ENCODE measurements at regions of chr16 and their contacts with region 1.

Region 1: GRCh38 chr16:72093448-72094265 is at the starts of genes DHX38 and TXNL4B:
- DNase-seq: peak; percentile 96
- ATAC-seq: peak; percentile 96
- H3K4me3 ChIP-seq: peak within 1 kb of the TSS; percentile 84 to 95 (median 88)
- H3K4me3 Mint-ChIP-seq: peak within 1 kb of the TSS; percentile 90
- H3K27ac ChIP-seq: peak within 1 kb of the TSS; percentile 85 to 91
- H3K27ac Mint-ChIP-seq: peak within 1 kb of the TSS; percentile 92
- H3K4me1 ChIP-seq: peaks cover 20 to 28% of the 10 kb centered on the region in 2 donors
- H3K4me1 Mint-ChIP-seq: peaks cover 42% of the 10 kb centered on the region
- H3K27me3 ChIP-seq: no peaks in the 10 kb centered on the region
- H3K27me3 Mint-ChIP-seq: no peaks in the 10 kb centered on the region
- CTCF ChIP-seq: no peak
- total RNA-seq, gene DHX38: 114 and 124 TPM in 2 replicates
- total RNA-seq, gene TXNL4B: 15.4 and 16.1 TPM in 2 replicates

Region 2: DNA sequence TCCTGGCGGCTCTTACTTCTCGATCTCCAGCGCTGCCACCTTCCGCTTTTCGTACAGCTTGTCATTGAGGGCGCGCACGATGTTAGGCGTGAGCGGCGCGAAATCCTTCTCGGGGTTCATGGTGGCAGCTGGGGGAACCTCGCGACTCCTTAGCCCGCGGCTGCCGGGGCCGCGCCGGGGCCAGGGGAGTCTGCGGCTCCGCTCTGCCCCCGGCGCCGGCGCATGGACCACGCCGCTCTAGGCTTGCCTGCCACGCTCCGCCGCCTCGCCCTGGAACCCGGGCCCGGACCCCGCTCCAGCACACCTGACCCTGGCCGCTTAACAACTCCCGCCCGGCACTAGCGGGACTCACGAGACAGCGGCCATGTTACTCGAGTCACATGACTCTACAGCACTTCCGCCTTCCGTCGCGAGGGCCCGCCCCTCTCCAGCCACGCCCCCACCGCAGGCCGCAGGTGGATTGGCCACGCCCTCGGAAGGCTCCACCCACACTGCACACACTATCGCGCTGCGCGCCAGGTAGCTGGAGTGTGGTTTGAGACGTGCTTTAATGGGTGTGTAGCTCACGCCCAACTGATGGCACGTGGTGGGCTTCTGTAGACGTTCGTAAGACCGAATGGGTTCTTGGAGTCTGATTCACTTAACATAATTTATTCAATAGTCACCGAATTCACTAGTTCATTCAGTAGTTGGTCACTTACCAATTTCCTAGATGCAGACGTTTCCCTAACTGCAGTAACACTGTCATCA is 1292.7 kb before region 1 on chr16 and contains the start of gene VAC14:
- CTCF ChIA-PET with region 1: no interaction called
- POLR2A ChIA-PET with region 1: no interaction called
- intact Hi-C with region 1: loop called (anchors 10 kb)
- DNase-seq: peak; percentile 97
- ATAC-seq: peak; percentile 98
- H3K4me3 ChIP-seq: peak within 1 kb of the TSS; percentile 38 to 86 (median 66)
- H3K4me3 Mint-ChIP-seq: peak within 1 kb of the TSS; percentile 98
- H3K27ac ChIP-seq: peak within 1 kb of the TSS; percentile 69 to 90
- H3K27ac Mint-ChIP-seq: peak within 1 kb of the TSS; percentile 96
- H3K4me1 ChIP-seq: peaks cover 16 to 21% of the 10 kb centered on the region in 2 donors
- H3K4me1 Mint-ChIP-seq: peaks cover 36% of the 10 kb centered on the region
- H3K27me3 ChIP-seq: peaks cover 0 to 6% (median 0%) of the 10 kb centered on the region in 4 experiments
- H3K27me3 Mint-ChIP-seq: no peaks in the 10 kb centered on the region
- CTCF ChIP-seq: no peak
- total RNA-seq, gene VAC14: 59.7 and 64.7 TPM in 2 replicates

Region 3: GRCh38 chr16:71894921-71895678 is 198.6 kb before region 1 on chr16 and contains the start of gene IST1:
- CTCF ChIA-PET with region 1: no interaction called
- POLR2A ChIA-PET with region 1: no interaction called
- intact Hi-C with region 1: loop called (anchors 5 kb)
- DNase-seq: peak; percentile 98
- ATAC-seq: peak; percentile 91
- H3K4me3 ChIP-seq: peak within 1 kb of the TSS; percentile 93 to 100 (median 99)
- H3K4me3 Mint-ChIP-seq: peak within 1 kb of the TSS; percentile 97
- H3K27ac ChIP-seq: peak within 1 kb of the TSS; percentile 83 to 88
- H3K27ac Mint-ChIP-seq: peak within 1 kb of the TSS; percentile 98
- H3K4me1 ChIP-seq: peaks cover 16 to 39% of the 10 kb centered on the region in 2 donors
- H3K4me1 Mint-ChIP-seq: peaks cover 22% of the 10 kb centered on the region
- H3K27me3 ChIP-seq: no peaks in the 10 kb centered on the region
- H3K27me3 Mint-ChIP-seq: no peaks in the 10 kb centered on the region
- CTCF ChIP-seq: no peak
- total RNA-seq, gene IST1: 268 and 302 TPM in 2 replicates

Region 4: GRCh38 chr16:72008424-72009216 is 85.0 kb before region 1 on chr16 and contains the start of gene DHODH:
- CTCF ChIA-PET with region 1: no interaction called
- POLR2A ChIA-PET with region 1: no interaction called
- intact Hi-C with region 1: loop called (anchors 1 kb)
- DNase-seq: peak; percentile 99
- ATAC-seq: peak; percentile 98
- H3K4me3 ChIP-seq: peak within 1 kb of the TSS; percentile 56 to 96 (median 66)
- H3K4me3 Mint-ChIP-seq: peak within 1 kb of the TSS; percentile 95
- H3K27ac ChIP-seq: peak within 1 kb of the TSS; percentile 73 to 85
- H3K27ac Mint-ChIP-seq: peak within 1 kb of the TSS; percentile 94
- H3K4me1 ChIP-seq: peaks cover 0 to 12% of the 10 kb centered on the region in 2 donors
- H3K4me1 Mint-ChIP-seq: peaks cover 16% of the 10 kb centered on the region
- H3K27me3 ChIP-seq: no peaks in the 10 kb centered on the region
- H3K27me3 Mint-ChIP-seq: peaks cover 4% of the 10 kb centered on the region
- CTCF ChIP-seq: no peak
- total RNA-seq, gene DHODH: 11.3 and 14.7 TPM in 2 replicates

Region 5: GRCh38 chr16:72066747-72067146 is 26.9 kb before region 1 on chr16:
- CTCF ChIA-PET with region 1: interaction called, 15 read pairs
- POLR2A ChIA-PET with region 1: no interaction called
- intact Hi-C with region 1: no loop called
- DNase-seq: peak; percentile 46
- ATAC-seq: no peak
- H3K4me3 ChIP-seq: no peak overlapping the region
- H3K4me3 Mint-ChIP-seq: no peak overlapping the region
- H3K27ac ChIP-seq: no peak overlapping the region
- H3K27ac Mint-ChIP-seq: no peak overlapping the region
- H3K4me1 ChIP-seq: no peaks in the 10 kb centered on the region
- H3K4me1 Mint-ChIP-seq: no peaks in the 10 kb centered on the region
- H3K27me3 ChIP-seq: no peaks in the 10 kb centered on the region
- H3K27me3 Mint-ChIP-seq: no peaks in the 10 kb centered on the region
- CTCF ChIP-seq: peak; percentile 67

Region 6: GRCh38 chr16:72172105-72173034 is 78.7 kb after region 1 on chr16 and contains the start of gene PMFBP1:
- CTCF ChIA-PET with region 1: interaction called, 3 read pairs
- POLR2A ChIA-PET with region 1: no interaction called
- intact Hi-C with region 1: loop called (anchors 1 kb)
- DNase-seq: peak; percentile 93
- ATAC-seq: peak; percentile 88
- H3K4me3 ChIP-seq: no peak within 1 kb of the TSS
- H3K4me3 Mint-ChIP-seq: peak within 1 kb of the TSS; percentile 52
- H3K27ac ChIP-seq: peak within 1 kb of the TSS; percentile 54 to 80
- H3K27ac Mint-ChIP-seq: peak within 1 kb of the TSS; percentile 91
- H3K4me1 ChIP-seq: peaks cover 12 to 13% of the 10 kb centered on the region in 2 donors
- H3K4me1 Mint-ChIP-seq: peaks cover 11% of the 10 kb centered on the region
- H3K27me3 ChIP-seq: no peaks in the 10 kb centered on the region
- H3K27me3 Mint-ChIP-seq: peaks cover 2% of the 10 kb centered on the region
- CTCF ChIP-seq: no peak
- total RNA-seq, gene PMFBP1: 9.5 and 9.7 TPM in 2 replicates

Region 7: DNA sequence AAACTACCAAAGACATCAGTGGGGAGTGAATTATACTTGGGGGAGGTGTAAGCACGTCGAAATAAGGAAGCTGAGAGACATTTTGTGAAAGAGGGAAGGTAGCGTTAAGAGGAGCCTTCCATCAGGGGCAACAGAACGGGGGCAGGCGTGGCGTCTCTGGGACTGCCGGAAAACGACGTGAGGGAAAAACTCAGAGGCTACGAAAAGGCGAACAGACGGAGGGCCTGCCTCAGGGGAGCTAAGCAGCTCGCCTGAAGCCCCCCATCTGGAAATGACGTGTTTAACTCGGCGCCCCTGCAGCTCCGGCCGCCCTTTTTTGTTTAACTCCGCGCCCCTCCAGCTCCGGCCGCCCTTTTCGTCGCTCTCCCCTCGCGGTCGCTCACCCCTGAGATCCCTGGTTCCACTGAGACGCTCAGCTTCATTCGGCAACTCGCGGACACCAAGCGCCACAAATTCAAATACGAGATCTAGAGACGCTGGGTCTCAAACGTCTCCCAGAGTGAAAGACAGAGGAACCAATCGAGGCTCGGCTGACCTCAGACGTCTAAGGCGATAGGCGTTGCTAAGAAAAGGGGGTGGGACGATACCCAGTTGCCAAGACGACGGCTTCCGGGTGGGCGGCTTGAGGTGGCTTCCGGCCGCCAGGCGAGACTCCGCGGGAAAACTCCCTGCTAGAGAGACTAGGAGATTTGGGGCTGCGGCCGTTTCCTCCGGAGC is 571.0 kb after region 1 on chr16:
- CTCF ChIA-PET with region 1: no interaction called
- POLR2A ChIA-PET with region 1: no interaction called
- intact Hi-C with region 1: loop called (anchors 1 kb)
- DNase-seq: peak; percentile 97
- ATAC-seq: peak; percentile 99
- H3K4me3 ChIP-seq: peak overlapping the region; percentile 87 to 99 (median 92)
- H3K4me3 Mint-ChIP-seq: peak overlapping the region; percentile 100
- H3K27ac ChIP-seq: peak overlapping the region; percentile 84 to 92
- H3K27ac Mint-ChIP-seq: peak overlapping the region; percentile 97
- H3K4me1 ChIP-seq: peaks cover 14% of the 10 kb centered on the region in 2 donors
- H3K4me1 Mint-ChIP-seq: peaks cover 15% of the 10 kb centered on the region
- H3K27me3 ChIP-seq: no peaks in the 10 kb centered on the region
- H3K27me3 Mint-ChIP-seq: no peaks in the 10 kb centered on the region
- CTCF ChIP-seq: no peak